ENCODE measurements at regions of chr7 and their contacts with region 1.

Region 1: GRCh38 chr7:140175221-140176121 is 1.3 kb downstream of the KDM7A start:
- DNase-seq: peak; percentile 79 to 95 (median 86)
- ATAC-seq: peak; percentile 72
- H3K4me3 ChIP-seq: peak overlapping the region; percentile 73
- H3K27ac ChIP-seq: peak overlapping the region; percentile 44; the same call in 2 of the 3 replicates
- H3K4me1 ChIP-seq: peaks cover 7 to 24% of the 10 kb centered on the region in 2 experiments
- H3K27me3 ChIP-seq: no peaks in the 10 kb centered on the region
- CTCF ChIP-seq: peak; percentile 86 to 98 (median 95)
- EP300 ChIP-seq: peak; percentile 60; the same call in 1 of the 2 replicates
- POLR2A ChIP-seq: peak; percentile 48; the same call in 1 of the 2 replicates
- RAD21 ChIP-seq: peak; percentile 97 to 98

Region 2: GRCh38 chr7:140192620-140193019 is 17.1 kb after region 1 on chr7:
- CTCF ChIA-PET with region 1: no interaction called
- POLR2A ChIA-PET with region 1: interaction called, 17 read pairs
- in situ Hi-C with region 1: no loop called
- intact Hi-C with region 1: no loop called
- DNase-seq: no peak
- ATAC-seq: no peak
- H3K4me3 ChIP-seq: no peak overlapping the region
- H3K27ac ChIP-seq: no peak overlapping the region
- H3K4me1 ChIP-seq: peaks cover 6 to 12% of the 10 kb centered on the region in 2 experiments; a peak in 4 of 5 replicates
- H3K27me3 ChIP-seq: peaks cover 0 to 2% of the 10 kb centered on the region in 2 experiments; a peak in 2 of 5 replicates
- CTCF ChIP-seq: no peak
- EP300 ChIP-seq: no peak
- POLR2A ChIP-seq: no peak
- RAD21 ChIP-seq: no peak

Region 3: DNA sequence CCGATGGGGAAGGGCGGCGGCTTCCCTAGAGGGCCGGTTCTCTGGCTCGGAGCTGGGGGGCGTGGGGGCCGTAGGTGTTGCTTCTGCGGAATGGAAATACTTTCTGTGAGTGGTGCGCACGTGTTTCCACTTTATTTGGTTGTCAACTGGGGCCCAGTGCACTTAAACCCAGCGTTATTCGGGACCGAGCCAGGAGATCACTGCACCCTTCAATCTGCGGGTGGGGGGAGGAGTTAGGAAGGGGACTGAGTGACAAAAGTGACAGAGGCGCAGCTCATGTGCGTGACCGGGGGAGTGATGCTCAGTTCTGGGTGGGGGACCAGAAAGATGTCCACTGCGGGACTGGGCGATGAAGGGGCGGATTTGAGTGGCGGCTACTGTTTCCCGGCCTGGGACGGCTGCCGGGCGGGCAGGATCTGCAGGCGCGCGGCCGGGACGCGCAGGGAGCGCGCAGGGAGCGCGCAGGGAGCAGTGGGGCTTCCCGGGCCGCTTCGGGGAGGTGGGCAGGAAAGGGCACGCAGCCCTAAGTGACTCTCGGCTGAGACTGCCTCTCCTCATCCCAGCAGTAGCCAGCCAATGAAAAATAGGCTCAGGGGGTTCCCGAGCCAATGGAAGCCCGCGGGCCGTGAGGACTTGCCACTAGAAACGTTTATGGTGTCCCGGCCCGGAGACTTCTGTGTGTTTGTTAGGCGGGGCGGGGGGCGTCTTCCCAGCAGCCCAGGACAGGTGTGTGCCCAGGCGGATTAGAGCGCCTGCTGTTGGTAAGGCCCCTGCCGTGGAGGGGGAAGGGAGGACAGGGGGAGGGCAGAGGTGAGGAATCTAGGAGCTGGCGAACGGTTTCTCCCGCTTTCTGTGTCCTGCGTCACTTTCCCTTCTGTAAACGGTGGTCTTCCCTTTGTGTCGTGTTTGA is 55.6 kb after region 1 on chr7:
- CTCF ChIA-PET with region 1: no interaction called
- POLR2A ChIA-PET with region 1: interaction called, 3 read pairs
- in situ Hi-C with region 1: no loop called
- intact Hi-C with region 1: loop called (anchors 1 kb)
- DNase-seq: peak in 3 of 4 experiments; percentile 59 to 69 (median 67)
- ATAC-seq: peak; percentile 55
- H3K4me3 ChIP-seq: peak overlapping the region; percentile 38
- H3K27ac ChIP-seq: no peak overlapping the region
- H3K4me1 ChIP-seq: peaks cover 10 to 30% of the 10 kb centered on the region in 2 experiments; a peak in 4 of 5 replicates
- H3K27me3 ChIP-seq: no peaks in the 10 kb centered on the region
- CTCF ChIP-seq: no peak; a peak in 1 of 6 replicates
- EP300 ChIP-seq: no peak
- POLR2A ChIP-seq: no peak
- RAD21 ChIP-seq: no peak

Region 4: GRCh38 chr7:140249036-140249806 is 73.8 kb after region 1 on chr7:
- CTCF ChIA-PET with region 1: no interaction called
- POLR2A ChIA-PET with region 1: no interaction called
- in situ Hi-C with region 1: no loop called
- intact Hi-C with region 1: no loop called
- DNase-seq: no peak
- ATAC-seq: no peak
- H3K4me3 ChIP-seq: no peak overlapping the region
- H3K27ac ChIP-seq: no peak overlapping the region
- H3K4me1 ChIP-seq: peaks cover 10 to 13% of the 10 kb centered on the region in 2 experiments; a peak in 4 of 5 replicates
- H3K27me3 ChIP-seq: no peaks in the 10 kb centered on the region
- CTCF ChIP-seq: no peak
- EP300 ChIP-seq: no peak
- POLR2A ChIP-seq: no peak
- RAD21 ChIP-seq: no peak

Region 5: GRCh38 chr7:140260352-140261104 is 85.1 kb after region 1 on chr7:
- CTCF ChIA-PET with region 1: no interaction called
- POLR2A ChIA-PET with region 1: no interaction called
- in situ Hi-C with region 1: no loop called
- intact Hi-C with region 1: no loop called
- DNase-seq: peak in 1 of 4 experiments; percentile 10
- ATAC-seq: peak; percentile 22
- H3K4me3 ChIP-seq: no peak overlapping the region
- H3K27ac ChIP-seq: no peak overlapping the region
- H3K4me1 ChIP-seq: peaks cover 0 to 3% of the 10 kb centered on the region in 2 experiments; a peak in 2 of 5 replicates
- H3K27me3 ChIP-seq: no peaks in the 10 kb centered on the region
- CTCF ChIP-seq: no peak
- EP300 ChIP-seq: no peak
- POLR2A ChIP-seq: no peak
- RAD21 ChIP-seq: no peak

Region 6: DNA sequence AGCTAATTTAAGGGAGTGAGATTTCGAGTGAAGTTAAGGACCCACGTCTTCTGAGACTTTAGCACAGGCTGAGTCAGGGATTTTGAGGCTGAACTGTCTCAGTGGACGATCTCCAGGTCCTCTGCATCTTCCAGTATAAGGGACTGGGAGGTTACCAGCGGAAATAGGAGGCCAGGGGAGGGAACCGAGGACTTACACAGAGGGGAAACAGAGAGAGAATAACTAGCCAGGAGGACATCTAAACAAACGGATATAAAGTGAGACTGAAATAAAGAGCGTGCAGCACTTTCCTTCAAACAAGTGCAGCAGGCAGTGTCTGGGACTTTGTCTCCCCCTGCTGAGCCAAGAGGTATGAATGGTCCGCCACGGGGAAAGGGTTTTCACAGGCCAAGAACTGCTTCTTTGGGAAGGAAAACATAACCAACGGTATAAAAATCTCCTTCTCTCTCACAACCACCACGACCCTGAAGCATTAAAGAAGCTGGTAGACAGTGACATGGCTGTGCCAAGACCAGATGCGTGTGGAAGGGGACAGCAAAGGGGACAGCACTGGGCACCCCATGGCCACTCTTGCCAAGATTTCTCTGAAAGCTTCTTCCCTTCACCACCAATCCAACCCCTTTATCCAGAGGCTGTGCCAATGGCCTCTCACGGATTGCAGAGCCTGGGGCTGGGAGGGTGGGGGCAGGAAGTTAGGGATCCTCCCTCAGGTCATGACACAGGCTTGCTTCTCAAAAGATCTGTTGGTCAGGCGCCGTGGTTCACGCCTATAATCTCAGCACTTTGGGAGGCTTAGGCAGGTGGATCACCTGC is 150.9 kb after region 1 on chr7:
- CTCF ChIA-PET with region 1: interaction called, 24 read pairs
- POLR2A ChIA-PET with region 1: interaction called, 4 read pairs
- in situ Hi-C with region 1: no loop called
- intact Hi-C with region 1: loop called (anchors 1 kb)
- DNase-seq: peak; percentile 67 to 87 (median 78)
- ATAC-seq: peak; percentile 88
- H3K4me3 ChIP-seq: no peak overlapping the region
- H3K27ac ChIP-seq: no peak overlapping the region
- H3K4me1 ChIP-seq: peaks cover 28 to 29% of the 10 kb centered on the region in 2 experiments
- H3K27me3 ChIP-seq: no peaks in the 10 kb centered on the region
- CTCF ChIP-seq: peak; percentile 92 to 98 (median 97)
- EP300 ChIP-seq: no peak
- POLR2A ChIP-seq: no peak
- RAD21 ChIP-seq: peak; percentile 97 to 99

Region 7: GRCh38 chr7:140653319-140654108 is 478.0 kb after region 1 on chr7:
- CTCF ChIA-PET with region 1: no interaction called
- POLR2A ChIA-PET with region 1: no interaction called
- in situ Hi-C with region 1: no loop called
- intact Hi-C with region 1: loop called (anchors 10 kb)
- DNase-seq: peak; percentile 77 to 84 (median 81)
- ATAC-seq: peak; percentile 83
- H3K4me3 ChIP-seq: no peak overlapping the region
- H3K27ac ChIP-seq: no peak overlapping the region
- H3K4me1 ChIP-seq: no peaks in the 10 kb centered on the region; a peak in 2 of 5 replicates
- H3K27me3 ChIP-seq: peaks cover 50 to 84% of the 10 kb centered on the region in 2 experiments; a peak in 4 of 5 replicates
- CTCF ChIP-seq: peak; percentile 87 to 98 (median 96)
- EP300 ChIP-seq: 0 out of 2 replicates have a peak, but pooled peaks have one; percentile 9
- POLR2A ChIP-seq: no peak
- RAD21 ChIP-seq: peak; percentile 95 to 96